B cell (primary cell): ENCODE measurements at regions of chr17 and their contacts with region 1.

Region 1: DNA sequence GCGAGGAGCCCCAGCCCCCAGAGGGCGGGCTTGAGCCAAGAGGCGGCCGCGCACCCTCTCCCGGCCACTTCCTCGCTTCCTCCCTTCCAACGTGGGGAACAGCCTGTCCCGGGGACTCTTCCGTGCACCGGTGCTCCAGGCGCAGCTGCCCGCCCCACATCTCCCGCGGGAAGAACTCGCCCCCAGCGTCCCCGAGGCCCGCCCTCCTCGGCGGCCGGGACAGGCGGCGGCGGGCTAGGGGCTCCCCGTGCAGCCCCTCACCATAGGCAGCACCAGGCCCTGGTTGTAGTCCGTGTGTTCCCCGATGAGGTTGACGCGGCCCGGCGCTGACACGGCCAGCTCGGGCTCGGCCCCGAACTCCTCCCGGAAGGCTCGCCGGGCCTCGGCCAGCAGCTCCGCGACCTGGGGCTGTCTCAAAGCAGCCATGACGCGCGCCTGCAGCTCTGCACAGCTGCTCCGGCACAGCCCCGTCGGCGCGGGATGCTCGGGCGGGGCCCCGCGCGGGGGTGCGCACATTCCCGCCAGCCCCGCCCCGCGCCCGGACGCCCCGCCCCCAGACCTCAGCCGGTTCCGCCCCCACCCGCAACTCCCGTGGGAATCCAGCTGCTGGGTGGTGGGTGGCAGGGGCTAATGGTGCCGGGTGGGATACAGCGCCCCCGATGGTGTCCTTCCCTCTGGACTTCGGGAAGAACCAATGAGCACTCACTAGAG is at the start of gene GALK1:
- DNase-seq: peak; percentile 88
- ATAC-seq: peak; percentile 91
- H3K4me3 ChIP-seq: peak within 1 kb of the TSS; percentile 38 to 88 (median 83)
- H3K4me3 Mint-ChIP-seq: peak within 1 kb of the TSS; percentile 85
- H3K27ac ChIP-seq: peak within 1 kb of the TSS; percentile 15 to 72
- H3K27ac Mint-ChIP-seq: peak within 1 kb of the TSS; percentile 83
- H3K4me1 ChIP-seq: peaks cover 14 to 23% of the 10 kb centered on the region in 2 donors
- H3K4me1 Mint-ChIP-seq: peaks cover 18% of the 10 kb centered on the region
- H3K27me3 ChIP-seq: no peaks in the 10 kb centered on the region
- H3K27me3 Mint-ChIP-seq: no peaks in the 10 kb centered on the region
- CTCF ChIP-seq: peak; percentile 78
- total RNA-seq, gene GALK1: 29.8 and 33.9 TPM in 2 replicates

Region 2: GRCh38 chr17:75779231-75779986 is 14.5 kb after region 1 on chr17:
- CTCF ChIA-PET with region 1: interaction called, 54 read pairs
- POLR2A ChIA-PET with region 1: interaction called, 78 read pairs
- intact Hi-C with region 1: loop called (anchors 1 kb)
- DNase-seq: peak; percentile 99
- ATAC-seq: peak; percentile 62
- H3K4me3 ChIP-seq: peak overlapping the region; percentile 89 to 95 (median 95)
- H3K4me3 Mint-ChIP-seq: peak overlapping the region; percentile 94
- H3K27ac ChIP-seq: peak overlapping the region; percentile 88 to 97
- H3K27ac Mint-ChIP-seq: peak overlapping the region; percentile 99
- H3K4me1 ChIP-seq: peaks cover 36 to 59% of the 10 kb centered on the region in 2 donors
- H3K4me1 Mint-ChIP-seq: peaks cover 63% of the 10 kb centered on the region
- H3K27me3 ChIP-seq: no peaks in the 10 kb centered on the region
- H3K27me3 Mint-ChIP-seq: no peaks in the 10 kb centered on the region
- CTCF ChIP-seq: no peak

Region 3: GRCh38 chr17:75784473-75785015 is 19.7 kb after region 1 on chr17 and contains the start of gene UNK:
- CTCF ChIA-PET with region 1: interaction called, 54 read pairs
- POLR2A ChIA-PET with region 1: interaction called, 78 read pairs
- intact Hi-C with region 1: loop called (anchors 1 kb)
- DNase-seq: peak; percentile 99
- ATAC-seq: peak; percentile 75
- H3K4me3 ChIP-seq: peak within 1 kb of the TSS; percentile 75 to 83 (median 81)
- H3K4me3 Mint-ChIP-seq: peak within 1 kb of the TSS; percentile 96
- H3K27ac ChIP-seq: peak within 1 kb of the TSS; percentile 100
- H3K27ac Mint-ChIP-seq: peak within 1 kb of the TSS; percentile 100
- H3K4me1 ChIP-seq: peaks cover 42 to 49% of the 10 kb centered on the region in 2 donors
- H3K4me1 Mint-ChIP-seq: peaks cover 53% of the 10 kb centered on the region
- H3K27me3 ChIP-seq: no peaks in the 10 kb centered on the region
- H3K27me3 Mint-ChIP-seq: no peaks in the 10 kb centered on the region
- CTCF ChIP-seq: no peak
- total RNA-seq, gene UNK: 70.3 and 82.3 TPM in 2 replicates

Region 4: DNA sequence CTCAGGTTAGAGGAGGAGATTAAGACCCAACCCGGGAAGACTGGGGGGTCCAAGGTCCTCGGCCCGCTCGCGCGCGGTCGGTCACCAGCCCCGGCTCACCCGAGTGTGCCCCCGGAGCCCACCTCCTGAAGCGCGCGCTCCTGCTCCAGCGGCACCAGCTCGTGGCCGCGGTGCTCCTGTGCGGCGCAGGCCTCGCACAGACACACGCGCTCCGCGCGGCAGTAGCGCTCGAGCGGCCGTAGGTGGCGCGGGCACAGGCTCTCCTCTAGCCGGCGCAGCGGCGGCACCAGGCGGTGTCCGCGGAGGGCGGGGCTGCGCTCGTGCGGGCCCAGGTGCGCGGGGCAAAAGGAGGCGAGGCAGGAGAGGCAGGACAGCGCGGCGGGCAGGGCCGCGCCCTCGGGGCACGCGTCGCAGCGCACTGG is 112.9 kb after region 1 on chr17:
- CTCF ChIA-PET with region 1: interaction called, 12 read pairs
- POLR2A ChIA-PET with region 1: interaction called, 3 read pairs
- intact Hi-C with region 1: no loop called
- DNase-seq: peak; percentile 87
- ATAC-seq: peak; percentile 77
- H3K4me3 ChIP-seq: peak overlapping the region in 4 of 5 experiments; percentile 46 to 69 (median 52)
- H3K4me3 Mint-ChIP-seq: peak overlapping the region; percentile 90
- H3K27ac ChIP-seq: peak overlapping the region; percentile 44 to 55
- H3K27ac Mint-ChIP-seq: peak overlapping the region; percentile 91
- H3K4me1 ChIP-seq: peaks cover 30 to 39% of the 10 kb centered on the region in 2 donors
- H3K4me1 Mint-ChIP-seq: peaks cover 35% of the 10 kb centered on the region
- H3K27me3 ChIP-seq: peaks cover 0 to 7% (median 1%) of the 10 kb centered on the region in 4 experiments
- H3K27me3 Mint-ChIP-seq: peaks cover 4% of the 10 kb centered on the region
- CTCF ChIP-seq: peak; percentile 73

Region 5: GRCh38 chr17:75896415-75897159 is 131.7 kb after region 1 on chr17 and contains the start of gene TRIM65:
- CTCF ChIA-PET with region 1: interaction called, 12 read pairs
- POLR2A ChIA-PET with region 1: interaction called, 3 read pairs
- intact Hi-C with region 1: no loop called
- DNase-seq: peak; percentile 86
- ATAC-seq: peak; percentile 86
- H3K4me3 ChIP-seq: peak within 1 kb of the TSS; percentile 14 to 80 (median 76)
- H3K4me3 Mint-ChIP-seq: peak within 1 kb of the TSS; percentile 85
- H3K27ac ChIP-seq: peak within 1 kb of the TSS; percentile 34 to 49
- H3K27ac Mint-ChIP-seq: peak within 1 kb of the TSS; percentile 82
- H3K4me1 ChIP-seq: peaks cover 16 to 19% of the 10 kb centered on the region in 2 donors
- H3K4me1 Mint-ChIP-seq: peaks cover 26% of the 10 kb centered on the region
- H3K27me3 ChIP-seq: no peaks in the 10 kb centered on the region
- H3K27me3 Mint-ChIP-seq: no peaks in the 10 kb centered on the region
- CTCF ChIP-seq: peak; percentile 41
- total RNA-seq, gene TRIM65: 39.2 and 40.7 TPM in 2 replicates

Region 6: GRCh38 chr17:76005263-76006149 is 240.6 kb after region 1 on chr17:
- CTCF ChIA-PET with region 1: interaction called, 21 read pairs
- POLR2A ChIA-PET with region 1: no interaction called
- intact Hi-C with region 1: no loop called
- DNase-seq: peak; percentile 85
- ATAC-seq: peak; percentile 80
- H3K4me3 ChIP-seq: no peak overlapping the region
- H3K4me3 Mint-ChIP-seq: no peak overlapping the region
- H3K27ac ChIP-seq: no peak overlapping the region
- H3K27ac Mint-ChIP-seq: peak overlapping the region; percentile 56
- H3K4me1 ChIP-seq: peaks cover 0 to 3% of the 10 kb centered on the region in 2 donors
- H3K4me1 Mint-ChIP-seq: no peaks in the 10 kb centered on the region
- H3K27me3 ChIP-seq: no peaks in the 10 kb centered on the region
- H3K27me3 Mint-ChIP-seq: no peaks in the 10 kb centered on the region
- CTCF ChIP-seq: peak; percentile 85